ENCODE measurements at regions of chr14 and their contacts with region 1.

Region 1: GRCh38 chr14:92783816-92784431 is 10.2 kb upstream of the GOLGA5 start:
- DNase-seq: no peak
- ATAC-seq: peak; percentile 80 to 84 (median 82)
- H3K4me3 ChIP-seq: no peak overlapping the region
- H3K27ac ChIP-seq: no peak overlapping the region
- H3K4me1 ChIP-seq: no peaks in the 10 kb centered on the region
- H3K27me3 ChIP-seq: no peaks in the 10 kb centered on the region
- CTCF ChIP-seq: peak; percentile 48 to 70 (median 60)
- POLR2A ChIP-seq: no peak

Region 2: DNA sequence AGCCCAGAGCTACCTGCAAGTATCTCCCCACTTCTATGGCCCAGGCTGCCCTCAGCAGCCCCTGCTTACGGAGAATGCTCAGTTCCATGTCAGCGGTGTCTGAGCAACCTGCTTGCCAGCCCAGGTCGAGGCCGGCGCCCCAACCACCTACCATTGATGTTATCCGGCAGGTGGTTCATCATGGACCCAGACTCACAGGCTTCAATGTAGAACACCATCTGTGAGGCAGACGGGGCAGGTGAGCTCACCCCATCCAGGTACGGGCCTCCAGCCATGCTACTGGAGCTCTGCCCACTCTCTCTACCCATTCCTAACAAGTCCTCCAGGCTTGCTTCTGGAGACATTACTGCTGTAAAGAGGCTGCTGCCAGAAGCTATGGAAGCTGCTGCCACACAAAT is 71.3 kb before region 1 on chr14:
- intact Hi-C with region 1: loop called (anchors 5 kb)
- DNase-seq: no peak
- ATAC-seq: no peak
- H3K4me3 ChIP-seq: no peak overlapping the region
- H3K27ac ChIP-seq: no peak overlapping the region
- H3K4me1 ChIP-seq: no peaks in the 10 kb centered on the region
- H3K27me3 ChIP-seq: no peaks in the 10 kb centered on the region
- CTCF ChIP-seq: no peak
- POLR2A ChIP-seq: no peak

Region 3: GRCh38 chr14:92719890-92720323 is 64.0 kb before region 1 on chr14:
- intact Hi-C with region 1: loop called in 1 of 2 experiments (anchors 5 kb)
- DNase-seq: no peak
- ATAC-seq: no peak
- H3K4me3 ChIP-seq: no peak overlapping the region
- H3K27ac ChIP-seq: no peak overlapping the region
- H3K4me1 ChIP-seq: no peaks in the 10 kb centered on the region
- H3K27me3 ChIP-seq: no peaks in the 10 kb centered on the region
- CTCF ChIP-seq: no peak
- POLR2A ChIP-seq: no peak

Region 4: DNA sequence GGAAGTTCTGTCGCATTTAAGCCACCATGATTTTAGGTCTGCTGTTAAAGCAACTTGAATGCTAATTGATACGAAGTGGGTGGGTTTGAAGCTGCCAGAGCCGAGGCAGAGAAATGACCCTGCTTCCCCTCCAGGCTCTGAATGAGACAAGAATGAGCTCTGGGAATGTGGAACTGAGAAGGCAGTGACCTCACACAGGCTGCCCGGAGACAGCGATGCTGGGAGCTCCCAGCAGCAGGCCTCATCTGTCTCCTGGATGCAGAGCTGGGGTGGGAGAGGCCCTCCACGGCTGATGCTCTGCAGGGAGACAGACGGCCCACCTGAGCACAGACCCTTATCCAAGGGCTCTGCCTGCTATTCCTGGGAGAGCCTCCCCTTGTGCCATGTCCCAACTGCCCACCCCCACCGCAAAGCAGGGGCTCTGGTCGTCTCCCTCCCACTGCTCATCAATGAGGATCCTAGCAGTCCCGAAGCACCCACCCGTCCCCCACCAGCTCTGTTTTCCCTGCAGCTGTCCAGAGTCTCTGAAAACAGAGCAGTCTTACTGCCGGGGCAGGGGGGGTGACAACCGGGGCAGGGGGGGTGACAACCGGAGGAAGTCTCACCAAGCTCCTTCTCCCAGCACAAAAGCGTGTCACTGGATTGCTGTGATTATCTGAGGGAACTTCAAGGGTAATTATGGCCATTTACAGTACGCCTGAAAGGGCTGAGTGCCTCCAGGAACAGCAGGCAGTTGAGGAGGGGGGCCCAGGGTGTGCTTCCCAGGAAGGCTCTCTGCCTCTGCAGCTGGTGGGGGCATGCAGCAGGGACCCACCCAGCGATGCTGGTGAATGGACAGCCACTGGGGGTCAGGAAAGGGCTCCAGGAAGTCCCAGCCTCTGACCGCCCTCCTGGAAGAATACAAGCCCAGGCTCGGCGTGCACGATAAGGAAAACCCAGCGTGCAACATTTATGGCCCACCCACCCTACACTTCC is 206.8 kb after region 1 on chr14:
- intact Hi-C with region 1: no loop called
- DNase-seq: peak in 1 of 3 donors; percentile 37
- ATAC-seq: no peak
- H3K4me3 ChIP-seq: no peak overlapping the region
- H3K27ac ChIP-seq: no peak overlapping the region
- H3K4me1 ChIP-seq: peaks cover 3 to 28% (median 16%) of the 10 kb centered on the region in 4 donors
- H3K27me3 ChIP-seq: no peaks in the 10 kb centered on the region
- CTCF ChIP-seq: no peak
- POLR2A ChIP-seq: no peak